Naive thymus-derived CD8-positive, alpha-beta T cell (primary cell): ENCODE measurements at regions of chr3 and their contacts with region 1.

Region 1: DNA sequence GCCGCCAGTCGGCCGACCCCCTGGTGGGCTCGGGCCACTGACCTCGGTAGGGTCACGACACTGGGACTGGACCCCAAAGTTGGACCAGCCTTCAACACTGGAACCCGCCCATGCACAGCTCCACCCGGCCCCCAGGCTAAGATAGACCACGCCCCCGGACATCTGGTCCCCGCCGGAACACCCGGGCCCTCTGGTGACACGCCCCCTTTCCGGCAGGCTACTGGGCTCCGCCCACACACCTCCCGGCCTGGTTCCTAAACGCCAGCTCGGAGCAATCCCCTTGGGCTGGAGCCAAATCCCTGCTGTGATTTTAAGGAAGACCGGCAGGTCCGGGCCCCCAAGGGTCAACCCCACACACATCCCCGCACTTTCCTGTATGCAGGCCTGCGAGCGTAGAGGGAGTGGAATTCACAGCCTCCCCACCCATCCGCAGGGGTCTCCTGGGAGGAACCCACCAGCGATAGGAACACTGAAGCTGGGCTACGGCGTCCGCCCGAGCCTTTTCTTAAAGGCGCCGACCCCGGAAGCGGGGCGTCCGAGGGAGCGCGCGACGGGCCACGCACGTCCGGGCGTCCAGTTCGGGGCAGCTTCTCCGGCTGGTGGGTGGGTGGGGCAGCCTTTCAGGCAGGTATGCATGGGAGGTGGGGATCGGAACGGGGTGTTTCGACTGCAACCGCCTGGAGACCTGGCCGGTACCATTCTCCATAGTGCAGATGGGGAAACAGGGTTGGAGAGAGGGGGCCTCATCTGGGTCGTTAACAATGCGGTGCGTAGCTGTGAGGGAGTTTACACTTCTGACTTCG is at the start of gene HEMK1:
- DNase-seq: peak; percentile 88 to 96 (median 93)
- ATAC-seq: peak; percentile 62 to 67
- H3K4me3 Mint-ChIP-seq: peak within 1 kb of the TSS; percentile 92 to 98 (median 97)
- H3K27ac Mint-ChIP-seq: peak within 1 kb of the TSS; percentile 93 to 98 (median 96)
- H3K4me1 Mint-ChIP-seq: peaks cover 36 to 79% (median 72%) of the 10 kb centered on the region in 4 donors
- H3K27me3 Mint-ChIP-seq: no peaks in the 10 kb centered on the region
- polyA plus RNA-seq, gene HEMK1: 20.2 to 43.1 (median 30.3) TPM

Region 2: DNA sequence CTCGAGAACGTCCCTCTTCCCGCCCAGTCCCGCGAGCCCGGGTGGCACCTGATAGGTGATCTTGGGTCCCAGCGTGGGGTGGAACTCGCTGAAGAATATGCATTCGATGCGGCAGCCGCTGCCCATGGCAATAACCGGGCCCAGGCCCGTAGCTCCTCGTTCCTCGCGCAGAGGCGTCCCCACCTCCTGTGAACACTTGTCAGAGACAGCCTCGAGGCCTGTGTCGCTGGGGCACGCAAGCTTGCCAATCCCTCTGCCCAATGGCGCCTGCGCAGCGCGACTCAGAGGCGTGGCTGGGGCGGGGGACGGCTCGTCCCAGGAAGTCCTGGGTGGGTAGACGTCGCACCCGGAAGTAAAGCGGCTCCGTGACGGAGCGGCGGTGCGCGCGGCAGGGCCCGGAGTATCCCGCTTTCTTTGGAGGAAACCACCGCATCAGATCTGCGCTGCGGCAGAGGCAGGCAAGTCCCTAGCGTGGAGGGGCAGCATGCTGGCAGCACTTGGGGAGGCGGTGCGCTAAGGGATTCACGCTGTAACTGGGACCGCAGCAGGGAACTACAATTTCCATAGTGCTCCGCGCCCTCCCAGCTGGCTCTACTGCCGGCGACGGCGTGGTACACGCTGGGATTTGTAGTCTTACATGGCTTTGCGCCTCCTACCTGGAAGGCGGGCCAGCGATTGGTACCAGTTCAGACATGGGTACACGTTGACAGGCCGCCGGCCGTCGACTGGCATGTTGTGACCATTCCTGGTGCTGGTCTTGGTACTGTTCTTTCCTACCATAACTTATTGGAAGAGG is 218.4 kb before region 1 on chr3 and contains the starts of genes CYB561D2 and NPRL2:
- POLR2A ChIA-PET with region 1: interaction called, 10 read pairs
- DNase-seq: peak; percentile 97 to 99 (median 99)
- ATAC-seq: peak; percentile 89 to 90
- H3K4me3 Mint-ChIP-seq: peak within 1 kb of the TSS; percentile 94 to 99 (median 97)
- H3K27ac Mint-ChIP-seq: peak within 1 kb of the TSS; percentile 98 to 100 (median 99)
- H3K4me1 Mint-ChIP-seq: peaks cover 34 to 82% (median 68%) of the 10 kb centered on the region in 4 donors
- H3K27me3 Mint-ChIP-seq: no peaks in the 10 kb centered on the region
- polyA plus RNA-seq, gene CYB561D2: 45.5 to 48.2 (median 47.7) TPM
- polyA plus RNA-seq, gene NPRL2: 36.2 to 45.3 (median 36.4) TPM

Region 3: DNA sequence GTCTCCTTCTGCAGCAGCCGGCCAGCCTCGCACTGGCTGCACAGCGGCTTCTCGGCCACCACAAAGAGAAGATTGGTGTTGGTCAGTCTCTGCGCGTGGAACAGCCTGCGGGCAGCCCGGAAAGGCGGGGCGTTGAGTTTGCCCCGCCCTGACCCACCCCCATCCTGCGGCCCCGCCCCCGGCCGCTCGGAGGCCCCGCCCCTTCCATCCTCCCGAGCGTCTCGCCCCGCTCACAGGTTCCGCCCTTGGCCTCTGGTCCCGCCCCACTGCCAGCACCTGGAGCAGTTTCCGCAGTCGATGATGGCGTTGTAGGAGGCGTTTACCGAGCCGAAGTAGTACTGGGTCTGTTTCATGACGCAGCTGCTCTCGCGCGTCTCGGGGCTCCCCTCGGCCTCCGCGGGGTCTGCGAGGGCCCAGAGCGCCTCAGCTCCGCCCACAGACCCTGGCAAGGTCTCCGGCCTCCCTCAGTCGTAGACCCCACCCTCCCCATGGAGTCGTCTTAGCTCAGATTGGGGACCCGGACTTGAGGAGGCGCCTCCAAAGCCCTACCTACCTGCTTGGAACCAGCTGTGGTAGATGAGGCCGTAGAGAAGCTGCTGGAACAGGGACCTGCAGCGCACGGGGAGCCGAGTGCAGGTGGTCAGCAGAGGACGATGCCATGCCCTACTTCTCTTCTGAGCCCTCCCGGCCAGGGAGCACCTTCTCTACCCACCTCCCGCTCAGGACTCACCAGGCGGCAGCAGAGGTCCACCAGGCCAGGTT is 203.9 kb before region 1 on chr3:
- POLR2A ChIA-PET with region 1: interaction called, 14 read pairs
- DNase-seq: peak; percentile 91 to 98 (median 94)
- ATAC-seq: peak; percentile 96 to 97
- H3K4me3 Mint-ChIP-seq: peak overlapping the region; percentile 87 to 93 (median 88)
- H3K27ac Mint-ChIP-seq: peak overlapping the region; percentile 81 to 97 (median 96)
- H3K4me1 Mint-ChIP-seq: peaks cover 14 to 44% (median 31%) of the 10 kb centered on the region in 4 donors
- H3K27me3 Mint-ChIP-seq: no peaks in the 10 kb centered on the region

Region 4: DNA sequence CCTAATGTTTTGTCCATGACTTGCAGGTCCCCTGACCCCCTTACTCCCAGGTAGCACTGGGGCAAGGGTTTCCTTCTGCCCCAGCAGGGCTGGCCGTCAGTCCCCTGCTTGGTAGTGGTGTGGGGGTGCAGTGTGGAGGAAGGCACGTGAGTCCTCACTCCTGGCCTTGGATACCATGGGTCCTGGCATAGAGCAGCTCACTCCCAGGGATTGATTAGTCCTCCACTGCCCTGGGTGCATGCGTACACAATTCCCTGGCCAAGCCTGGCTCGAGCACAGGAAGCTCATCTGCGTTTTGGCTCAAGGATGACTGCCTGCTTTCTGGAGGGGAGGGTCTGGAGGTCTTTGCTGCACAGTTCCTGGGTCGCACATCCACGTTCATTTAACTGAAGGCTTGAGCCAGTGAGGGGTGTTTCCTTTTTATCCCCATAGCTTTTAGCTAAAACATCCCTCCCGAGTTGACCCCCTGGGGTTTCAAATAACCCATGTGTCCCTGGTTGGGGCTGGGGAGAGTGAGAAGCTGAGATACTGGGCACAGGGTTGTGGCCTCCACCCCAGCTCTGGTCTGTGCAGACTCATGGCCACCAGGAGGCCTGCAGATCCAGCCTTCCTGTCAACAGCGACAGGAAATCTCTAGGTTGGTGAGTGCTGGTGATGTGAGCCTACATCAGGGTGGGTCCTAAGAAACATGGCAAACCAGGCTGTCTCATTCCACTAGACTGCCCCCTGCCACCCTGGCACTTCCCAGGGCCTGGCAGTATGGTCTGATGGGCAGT is 11.7 kb after region 1 on chr3:
- POLR2A ChIA-PET with region 1: interaction called, 203 read pairs
- DNase-seq: peak in 1 of 10 donors; percentile 28
- ATAC-seq: peak; percentile 72 to 76
- H3K4me3 Mint-ChIP-seq: peak overlapping the region in 4 of 10 donors; percentile 9 to 63 (median 21)
- H3K27ac Mint-ChIP-seq: peak overlapping the region in 7 of 10 donors; percentile 40 to 88 (median 75)
- H3K4me1 Mint-ChIP-seq: peaks cover 16 to 65% (median 33%) of the 10 kb centered on the region in 4 donors
- H3K27me3 Mint-ChIP-seq: no peaks in the 10 kb centered on the region

Region 5: DNA sequence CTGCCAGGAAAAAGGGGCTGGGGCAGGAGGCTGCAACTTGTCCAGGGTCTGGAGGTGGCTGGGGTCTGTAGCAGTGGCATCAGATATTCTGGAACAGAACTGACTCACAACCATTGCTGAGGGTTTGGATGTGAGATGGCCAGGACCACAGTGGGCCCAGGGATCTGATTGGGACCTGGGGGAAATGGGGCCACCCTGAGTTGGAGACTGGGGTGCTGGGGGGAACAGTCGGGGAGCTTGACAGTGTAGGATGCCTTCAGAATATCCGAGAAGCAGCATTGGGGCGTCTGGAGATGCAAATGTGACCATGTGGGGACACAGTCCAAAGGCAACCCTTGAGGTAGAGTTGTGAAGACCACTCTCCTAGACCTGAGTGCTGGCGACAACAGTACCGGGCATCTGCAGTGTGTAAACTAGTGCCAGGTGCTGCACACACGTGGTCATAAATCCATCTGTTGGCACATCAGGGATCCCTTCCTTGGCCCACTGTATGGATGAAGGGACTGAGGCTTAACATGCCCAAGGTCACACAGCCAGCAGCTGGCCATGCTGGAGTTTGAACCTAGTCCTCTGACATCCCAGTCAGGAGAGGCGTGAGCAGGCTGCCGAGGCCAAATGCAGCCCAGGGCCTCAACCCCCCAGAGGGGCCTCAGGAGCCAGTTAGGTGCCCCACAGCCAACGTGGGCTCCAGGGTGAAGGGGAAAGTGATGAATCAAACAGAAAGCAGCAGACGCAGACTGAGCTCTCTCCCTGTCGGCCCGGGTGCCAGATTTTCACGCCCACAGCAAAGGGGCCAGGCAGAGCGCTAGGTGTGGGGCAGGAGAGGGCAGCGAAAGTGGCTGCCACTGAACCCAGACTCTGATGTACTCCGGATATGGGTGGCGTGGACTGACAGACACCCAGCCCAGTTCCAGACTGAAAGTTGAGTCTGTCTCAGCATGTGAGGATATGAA is 18.9 kb after region 1 on chr3:
- POLR2A ChIA-PET with region 1: interaction called, 203 read pairs
- DNase-seq: peak in 4 of 10 donors; percentile 29 to 61 (median 38)
- ATAC-seq: peak; percentile 32 to 38
- H3K4me3 Mint-ChIP-seq: peak overlapping the region; percentile 9 to 72 (median 46)
- H3K27ac Mint-ChIP-seq: peak overlapping the region; percentile 84 to 95 (median 90)
- H3K4me1 Mint-ChIP-seq: peaks cover 34 to 77% (median 62%) of the 10 kb centered on the region in 4 donors
- H3K27me3 Mint-ChIP-seq: no peaks in the 10 kb centered on the region

Region 6: DNA sequence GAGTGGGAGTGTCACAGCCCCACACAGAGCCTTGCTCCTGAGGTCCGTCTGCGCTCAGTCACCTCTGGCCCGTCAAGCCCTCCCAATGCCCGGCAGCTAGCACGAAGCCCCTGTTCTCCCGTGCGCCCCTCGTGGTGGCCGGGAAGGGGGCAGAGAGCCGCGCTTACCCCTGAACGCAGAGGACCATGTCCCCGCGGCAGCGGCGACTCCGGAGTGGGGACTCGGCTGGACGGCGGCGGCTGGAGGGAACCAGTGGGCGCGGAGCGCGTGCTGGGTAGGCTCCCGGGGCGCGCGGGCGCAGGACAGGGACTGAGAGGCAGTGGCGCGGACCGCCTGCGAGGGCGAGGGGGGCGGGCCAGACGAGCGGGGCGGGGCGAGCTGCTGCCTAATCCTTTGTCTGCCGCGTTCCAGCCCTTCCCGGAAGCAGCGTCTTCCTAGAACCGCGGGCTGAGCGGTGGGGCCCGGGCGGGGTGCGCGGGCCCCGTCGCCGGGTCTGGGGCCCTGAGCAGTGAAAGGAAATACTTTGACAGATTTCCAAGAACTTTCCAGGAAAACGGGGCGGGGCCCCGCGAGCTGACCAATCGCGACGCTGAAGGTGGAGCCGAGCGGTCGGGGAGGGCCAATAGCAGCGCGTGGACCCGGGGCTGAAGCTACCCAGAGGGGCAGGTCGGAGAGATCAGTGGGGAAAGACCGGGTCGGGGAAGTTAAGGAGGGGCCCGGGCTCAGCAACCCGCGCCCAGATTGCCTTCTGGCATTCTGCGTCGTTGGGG is 42.5 kb after region 1 on chr3 and contains the start of gene CISH:
- POLR2A ChIA-PET with region 1: interaction called, 623 read pairs
- DNase-seq: peak; percentile 78 to 95 (median 90)
- ATAC-seq: peak; percentile 69 to 70
- H3K4me3 Mint-ChIP-seq: peak within 1 kb of the TSS; percentile 92 to 98 (median 94)
- H3K27ac Mint-ChIP-seq: peak within 1 kb of the TSS; percentile 91 to 98 (median 94)
- H3K4me1 Mint-ChIP-seq: peaks cover 43 to 83% (median 76%) of the 10 kb centered on the region in 4 donors
- H3K27me3 Mint-ChIP-seq: no peaks in the 10 kb centered on the region
- polyA plus RNA-seq, gene CISH: 16.3 to 135 (median 100) TPM